Dendritic cell treated with granulocyte-macrophage colony-stimulating factor and Interleukin-4, amounts not matched to agents 40 ng/mL and 50 ng/mL, for 4 days (primary cell): ENCODE measurements at regions of chr13 and their contacts with region 1.

Region 1: GRCh38 chr13:28792992-28793391 is 27.1 kb upstream of the MTUS2 start:
- H3K4me3 Mint-ChIP-seq: no peak overlapping the region
- H3K27ac Mint-ChIP-seq: no peak overlapping the region
- H3K4me1 Mint-ChIP-seq: peaks cover 7% of the 10 kb centered on the region
- H3K27me3 Mint-ChIP-seq: peaks cover 58% of the 10 kb centered on the region

Region 2: DNA sequence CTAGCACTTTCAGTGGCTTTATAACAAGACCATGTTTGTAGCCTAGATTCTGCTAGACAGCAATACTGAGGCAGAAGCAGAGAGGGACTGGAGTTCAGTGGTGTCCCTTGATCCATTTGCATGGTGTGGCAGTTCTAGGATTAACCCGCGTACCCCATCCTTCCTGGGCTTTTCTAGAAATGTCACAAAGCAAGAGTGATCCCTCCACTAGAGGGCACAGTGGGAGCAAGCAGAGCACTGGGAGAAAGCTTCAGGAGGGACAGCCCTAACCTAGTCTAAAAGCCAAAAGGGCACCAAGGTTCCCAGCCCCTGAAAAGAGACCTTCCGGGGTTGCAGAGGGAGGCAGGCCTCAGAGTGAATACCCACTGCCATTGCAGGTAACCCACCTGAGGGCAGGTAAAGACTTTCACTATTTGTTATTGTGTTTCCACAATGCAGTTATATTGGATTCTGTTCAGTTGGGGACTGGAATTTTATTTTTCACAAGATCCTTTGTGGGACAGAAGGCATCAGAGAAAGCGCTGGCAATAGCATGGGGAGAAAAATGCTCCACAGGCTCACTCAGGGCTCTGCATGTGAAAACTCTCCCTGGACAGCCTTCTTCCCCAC is 468.7 kb before region 1 on chr13:
- intact Hi-C with region 1: loop called (anchors 1 kb)
- H3K4me3 Mint-ChIP-seq: no peak overlapping the region
- H3K27ac Mint-ChIP-seq: no peak overlapping the region
- H3K4me1 Mint-ChIP-seq: peaks cover 9% of the 10 kb centered on the region
- H3K27me3 Mint-ChIP-seq: peaks cover 60% of the 10 kb centered on the region

Region 3: GRCh38 chr13:28394422-28394821 is 398.6 kb before region 1 on chr13:
- intact Hi-C with region 1: loop called (anchors 5 kb)
- H3K4me3 Mint-ChIP-seq: no peak overlapping the region
- H3K27ac Mint-ChIP-seq: no peak overlapping the region
- H3K4me1 Mint-ChIP-seq: peaks cover 11% of the 10 kb centered on the region
- H3K27me3 Mint-ChIP-seq: peaks cover 42% of the 10 kb centered on the region

Region 4: GRCh38 chr13:28679628-28680027 is 113.4 kb before region 1 on chr13:
- intact Hi-C with region 1: loop called (anchors 2 kb)
- H3K4me3 Mint-ChIP-seq: no peak overlapping the region
- H3K27ac Mint-ChIP-seq: no peak overlapping the region
- H3K4me1 Mint-ChIP-seq: peaks cover 9% of the 10 kb centered on the region
- H3K27me3 Mint-ChIP-seq: no peaks in the 10 kb centered on the region

Region 5: GRCh38 chr13:28718543-28719226 is 74.3 kb before region 1 on chr13 and contains the start of gene SLC46A3:
- intact Hi-C with region 1: no loop called
- H3K4me3 Mint-ChIP-seq: peak within 1 kb of the TSS; percentile 94
- H3K27ac Mint-ChIP-seq: peak within 1 kb of the TSS; percentile 95
- H3K4me1 Mint-ChIP-seq: peaks cover 39% of the 10 kb centered on the region
- H3K27me3 Mint-ChIP-seq: peaks cover under 1% of the 10 kb centered on the region

Region 6: DNA sequence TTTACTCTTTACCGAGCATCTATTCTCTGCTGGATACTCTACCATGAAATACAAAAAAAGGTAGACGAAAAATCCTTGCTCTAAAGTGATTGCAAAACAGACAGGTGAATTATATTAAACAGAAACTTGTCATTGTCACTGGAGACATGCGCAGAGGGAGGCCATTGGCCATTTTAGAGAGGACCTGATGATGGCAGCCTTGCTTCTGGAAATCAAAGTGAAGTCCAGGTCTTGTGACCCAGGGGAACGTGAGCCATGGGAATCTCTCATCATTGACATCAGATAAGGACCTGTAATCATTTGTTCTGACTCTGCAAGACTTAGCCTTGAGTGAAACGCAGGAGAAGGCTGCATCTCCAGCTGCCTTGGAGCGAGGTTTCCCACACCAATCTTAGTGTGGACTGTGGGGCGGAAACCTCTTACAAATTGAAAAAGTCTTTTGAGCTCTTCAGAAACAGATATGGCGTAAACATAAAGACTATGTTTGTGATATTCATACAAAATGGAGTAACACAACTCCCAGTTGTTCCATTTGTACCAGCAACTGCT is 57.4 kb before region 1 on chr13:
- intact Hi-C with region 1: loop called (anchors 10 kb)
- H3K4me3 Mint-ChIP-seq: no peak overlapping the region
- H3K27ac Mint-ChIP-seq: no peak overlapping the region
- H3K4me1 Mint-ChIP-seq: peaks cover 9% of the 10 kb centered on the region
- H3K27me3 Mint-ChIP-seq: peaks cover 1% of the 10 kb centered on the region